AG04450 (cell line): ENCODE measurements at regions of chr16 and their contacts with region 1.

Region 1: GRCh38 chr16:84532291-84532724 is 27.8 kb upstream of the MEAK7 start:
- DNase-seq: peak; percentile 94
- H3K4me3 ChIP-seq: no peak overlapping the region
- H3K27ac ChIP-seq: peak overlapping the region; percentile 98
- H3K27me3 ChIP-seq: no peaks in the 10 kb centered on the region
- CTCF ChIP-seq: no peak

Region 2: DNA sequence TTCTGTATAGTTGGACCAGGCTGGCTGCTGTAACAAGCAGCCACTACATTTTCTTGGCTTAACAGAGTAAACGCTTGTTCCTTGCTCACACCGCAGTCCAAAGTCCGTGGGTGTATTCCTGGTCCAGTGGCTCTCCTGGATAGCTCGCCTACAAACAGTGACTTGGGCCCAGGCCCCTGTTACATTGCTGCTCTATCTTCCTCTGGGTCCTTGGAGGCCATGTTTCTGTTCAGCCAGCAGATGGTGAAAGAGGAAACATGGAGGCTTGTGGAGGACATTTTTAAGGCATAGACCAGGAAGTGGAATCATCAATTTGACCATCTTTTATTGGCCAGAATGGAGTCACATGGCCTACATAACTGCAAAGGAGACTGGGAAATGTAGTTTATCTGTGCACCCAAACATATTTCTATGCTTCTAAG is 108.9 kb before region 1 on chr16:
- CTCF ChIA-PET with region 1: no interaction called
- POLR2A ChIA-PET with region 1: no interaction called
- DNase-seq: no peak
- H3K4me3 ChIP-seq: no peak overlapping the region
- H3K27ac ChIP-seq: no peak overlapping the region
- H3K27me3 ChIP-seq: peaks cover 22% of the 10 kb centered on the region
- CTCF ChIP-seq: no peak

Region 3: GRCh38 chr16:84518748-84519341 is 13.5 kb before region 1 on chr16:
- CTCF ChIA-PET with region 1: interaction called, 4 read pairs
- POLR2A ChIA-PET with region 1: interaction called, 11 read pairs
- DNase-seq: no peak
- H3K4me3 ChIP-seq: no peak overlapping the region
- H3K27ac ChIP-seq: no peak overlapping the region
- H3K27me3 ChIP-seq: no peaks in the 10 kb centered on the region
- CTCF ChIP-seq: no peak